PC-3 (cell line): ENCODE measurements at regions of chr4 and their contacts with region 1.

Region 1: GRCh38 chr4:72318421-72319170 is 250.4 kb downstream of the ADAMTS3 start:
- DNase-seq: peak; percentile 75
- ATAC-seq: peak; percentile 42
- H3K4me3 ChIP-seq: peak overlapping the region; percentile 26; the same call in 1 of the 2 replicates
- H3K27ac ChIP-seq: peak overlapping the region; percentile 98
- H3K4me1 ChIP-seq: peaks cover 52% of the 10 kb centered on the region
- H3K27me3 ChIP-seq: no peaks in the 10 kb centered on the region
- CTCF ChIP-seq: no peak

Region 2: GRCh38 chr4:71677568-71677967 is 641.0 kb before region 1 on chr4:
- CTCF ChIA-PET with region 1: no interaction called
- POLR2A ChIA-PET with region 1: no interaction called
- intact Hi-C with region 1: no loop called
- DNase-seq: no peak
- ATAC-seq: no peak
- H3K4me3 ChIP-seq: no peak overlapping the region
- H3K27ac ChIP-seq: no peak overlapping the region
- H3K4me1 ChIP-seq: 0 out of 2 replicates have a peak, but pooled peaks cover 7% of the 10 kb centered on the region
- H3K27me3 ChIP-seq: no peaks in the 10 kb centered on the region
- CTCF ChIP-seq: no peak

Region 3: DNA sequence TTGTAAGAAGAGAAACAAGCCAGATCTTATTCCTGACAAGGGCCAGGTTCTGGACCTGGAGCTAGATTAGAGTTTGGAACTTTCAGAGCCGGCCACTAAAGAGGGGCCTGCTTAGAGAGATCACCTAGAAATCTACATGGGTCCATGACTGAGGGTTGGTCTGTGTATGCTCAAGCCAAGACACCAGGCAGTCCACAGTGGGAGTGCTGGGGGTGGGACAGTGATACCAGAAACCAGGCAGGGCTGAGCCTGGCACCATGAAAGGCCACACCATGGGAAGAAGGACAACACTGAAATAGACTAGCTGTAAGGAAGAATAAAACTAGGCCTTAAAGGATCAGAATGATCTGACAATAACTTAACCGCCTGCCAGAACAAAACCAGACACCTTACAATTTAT is 16.8 kb before region 1 on chr4:
- CTCF ChIA-PET with region 1: no interaction called
- POLR2A ChIA-PET with region 1: interaction called, 10 read pairs
- intact Hi-C with region 1: no loop called
- DNase-seq: no peak
- ATAC-seq: no peak
- H3K4me3 ChIP-seq: no peak overlapping the region
- H3K27ac ChIP-seq: no peak overlapping the region
- H3K4me1 ChIP-seq: no peaks in the 10 kb centered on the region
- H3K27me3 ChIP-seq: no peaks in the 10 kb centered on the region
- CTCF ChIP-seq: no peak

Region 4: DNA sequence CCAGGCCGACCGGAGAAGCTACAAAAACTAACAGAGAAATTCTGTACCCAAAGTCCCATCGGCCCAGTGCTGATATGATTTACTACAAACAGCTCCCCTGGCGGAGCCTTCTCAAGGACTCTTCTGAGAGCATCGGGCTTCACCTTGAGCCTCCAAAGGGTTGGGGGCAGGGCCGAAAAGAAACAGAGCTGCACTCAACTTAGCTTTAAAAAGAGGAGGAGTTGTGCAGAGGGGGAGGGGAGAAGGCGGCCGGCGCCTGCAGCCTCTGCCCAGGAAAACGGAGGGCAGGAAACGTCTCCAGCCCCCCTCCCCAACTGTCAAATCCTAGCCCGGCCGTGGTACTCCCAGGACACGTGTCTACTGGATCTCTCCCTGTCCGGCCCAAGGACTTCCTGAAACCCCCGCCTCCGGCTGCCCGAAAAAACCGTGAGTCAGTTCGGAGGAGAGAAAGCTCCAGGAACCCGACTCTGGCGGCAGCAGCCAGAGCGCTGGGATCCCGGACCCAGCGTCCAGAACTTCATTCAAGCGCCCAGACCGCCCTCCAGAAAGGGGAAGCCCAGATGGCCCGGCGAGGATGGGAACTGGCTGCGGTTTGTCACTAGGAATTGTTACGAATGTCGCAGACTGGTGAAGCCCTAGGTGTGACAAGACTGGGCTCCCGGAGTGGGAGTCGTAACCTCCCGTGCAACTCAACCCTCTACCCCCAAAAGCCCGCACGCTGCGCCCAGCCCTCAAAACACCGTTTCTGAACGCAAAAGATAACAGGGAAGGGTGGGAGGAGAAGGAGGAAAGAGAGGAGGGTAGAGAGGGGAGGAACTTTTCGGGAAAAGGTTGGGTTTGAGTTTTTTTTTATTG is 249.5 kb after region 1 on chr4:
- CTCF ChIA-PET with region 1: no interaction called
- POLR2A ChIA-PET with region 1: no interaction called
- intact Hi-C with region 1: loop called (anchors 1 kb)
- DNase-seq: peak; percentile 96
- ATAC-seq: peak; percentile 76
- H3K4me3 ChIP-seq: peak overlapping the region; percentile 92
- H3K27ac ChIP-seq: peak overlapping the region; percentile 77
- H3K4me1 ChIP-seq: peaks cover 36% of the 10 kb centered on the region
- H3K27me3 ChIP-seq: no peaks in the 10 kb centered on the region
- CTCF ChIP-seq: peak; percentile 66